Kidney (tissue), 22 donors: ENCODE measurements at regions of chr2 and their contacts with region 1.

Region 1: GRCh38 chr2:109128048-109128465 is 948 bp upstream of the SH3RF3 start:
- DNase-seq: peak; percentile 90 to 93 (median 90)
- H3K4me3 ChIP-seq: peak overlapping the region; percentile 36 to 69 (median 62)
- H3K27ac ChIP-seq: peak overlapping the region; percentile 28 to 87
- H3K4me1 ChIP-seq: peaks cover 0 to 2% (median 0%) of the 10 kb centered on the region in 3 donors
- H3K27me3 ChIP-seq: peaks cover 2% of the 10 kb centered on the region
- CTCF ChIP-seq: peak; percentile 71

Region 2: GRCh38 chr2:109510136-109511028 is 382.3 kb after region 1 on chr2:
- intact Hi-C with region 1: loop called (anchors 5 kb)
- DNase-seq: peak; percentile 82 to 89 (median 85)
- H3K4me3 ChIP-seq: no peak overlapping the region
- H3K27ac ChIP-seq: no peak overlapping the region
- H3K4me1 ChIP-seq: peaks cover 0 to 15% (median 11%) of the 10 kb centered on the region in 3 donors
- H3K27me3 ChIP-seq: peaks cover 3% of the 10 kb centered on the region
- CTCF ChIP-seq: peak; percentile 93